Activated CD8-positive, alpha-beta T cell treated with anti-CD3 and anti-CD28 coated beads, Interleukin-2, amount 10 ng/mL, durations not matched to agents 7 days and 5 days (primary cell): ENCODE measurements at regions of chr14 and their contacts with region 1.

Region 1: DNA sequence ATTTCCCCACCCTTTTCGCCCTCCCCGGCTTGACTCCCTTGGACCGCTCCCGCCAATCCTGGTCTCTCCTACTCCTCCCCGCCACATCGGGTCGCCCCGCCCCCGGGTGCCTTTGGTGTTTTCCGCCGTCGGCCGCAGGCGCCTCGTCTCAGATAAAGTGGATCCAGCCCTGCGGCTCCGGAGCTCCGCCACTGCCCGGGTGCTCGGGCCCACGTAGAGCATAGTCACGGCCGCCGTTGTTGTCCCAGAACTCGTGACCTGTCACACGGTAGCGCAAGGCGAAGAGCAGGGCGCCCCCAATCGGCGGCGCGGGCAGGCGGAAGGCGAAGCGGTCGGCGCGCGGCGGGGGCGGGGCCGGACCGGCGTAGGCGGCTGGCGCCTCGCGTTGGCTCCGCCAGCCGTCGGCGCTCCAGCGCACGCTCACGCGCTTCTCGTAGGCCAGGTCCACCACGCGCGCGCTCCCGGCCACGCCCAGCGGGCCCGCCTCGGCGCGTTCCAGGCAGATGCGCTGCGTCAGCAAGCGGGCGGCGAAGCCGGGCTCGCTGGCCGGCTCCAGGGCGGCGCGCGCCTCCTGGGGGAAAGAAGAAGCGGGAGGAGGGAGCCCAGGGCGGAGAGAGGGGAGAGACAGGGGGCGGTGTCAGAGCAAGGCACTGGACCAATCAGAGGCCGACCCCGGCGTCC is 1.2 kb downstream of the PPP1R3E start:
- DNase-seq: peak; percentile 97
- ATAC-seq: peak; percentile 86
- H3K4me3 Mint-ChIP-seq: peak overlapping the region; percentile 91
- H3K27ac Mint-ChIP-seq: peak overlapping the region; percentile 99
- H3K4me1 Mint-ChIP-seq: peaks cover 31% of the 10 kb centered on the region
- H3K27me3 Mint-ChIP-seq: peaks cover 11% of the 10 kb centered on the region

Region 2: DNA sequence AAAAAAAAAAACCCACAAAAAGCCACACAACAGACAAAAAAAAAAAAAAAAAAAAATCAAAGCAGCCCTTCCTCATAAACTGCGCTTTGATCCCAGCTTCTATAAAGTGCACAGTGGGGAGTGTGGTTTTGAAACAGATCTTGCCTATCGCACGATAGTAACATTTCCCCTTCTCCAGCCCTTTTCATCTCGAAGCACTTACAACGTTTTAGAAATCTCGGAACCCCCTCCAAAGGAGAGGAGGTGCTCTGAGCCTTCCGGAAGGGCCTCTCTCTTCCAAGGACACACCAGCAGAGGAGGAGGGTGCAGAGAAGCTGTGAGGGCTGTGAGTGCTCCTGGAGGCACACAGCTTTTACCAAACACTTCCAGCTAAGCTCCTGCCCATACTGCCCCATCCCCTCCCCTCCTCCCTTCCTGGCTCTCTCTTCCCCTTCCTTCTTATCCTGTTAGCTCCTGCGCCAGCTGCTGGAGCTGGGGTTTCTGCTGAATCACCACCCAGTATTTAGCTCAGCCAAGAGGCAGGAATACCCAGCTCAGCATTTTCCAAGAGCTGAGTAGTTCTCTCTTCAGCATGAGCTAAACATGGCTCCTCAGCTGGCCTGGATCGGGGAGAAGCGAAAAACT is 146.4 kb before region 1 on chr14:
- CTCF ChIA-PET with region 1: no interaction called
- POLR2A ChIA-PET with region 1: no interaction called
- DNase-seq: no peak
- ATAC-seq: no peak
- H3K4me3 Mint-ChIP-seq: no peak overlapping the region
- H3K27ac Mint-ChIP-seq: no peak overlapping the region
- H3K4me1 Mint-ChIP-seq: peaks cover 7% of the 10 kb centered on the region
- H3K27me3 Mint-ChIP-seq: peaks cover 3% of the 10 kb centered on the region

Region 3: DNA sequence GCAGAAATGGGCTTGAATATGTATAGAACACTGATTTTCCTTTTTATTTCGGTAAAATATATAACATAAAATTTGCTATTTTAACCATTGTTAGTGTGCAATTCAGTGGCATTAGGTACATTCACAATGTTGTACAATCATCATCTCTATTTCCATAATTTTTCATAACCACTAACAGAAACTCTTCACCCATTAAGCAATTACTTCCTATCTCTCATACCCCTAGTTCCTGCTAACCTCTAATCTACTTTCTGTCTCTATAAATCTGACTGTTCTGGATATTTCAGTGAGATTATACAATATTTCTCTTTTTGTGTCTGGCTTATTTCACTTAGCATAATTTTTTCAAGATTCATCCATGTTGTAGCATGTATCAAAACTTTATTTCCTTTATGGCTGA is 72.6 kb before region 1 on chr14:
- CTCF ChIA-PET with region 1: no interaction called
- POLR2A ChIA-PET with region 1: no interaction called
- DNase-seq: no peak
- ATAC-seq: no peak
- H3K4me3 Mint-ChIP-seq: no peak overlapping the region
- H3K27ac Mint-ChIP-seq: no peak overlapping the region
- H3K4me1 Mint-ChIP-seq: no peaks in the 10 kb centered on the region
- H3K27me3 Mint-ChIP-seq: peaks cover 19% of the 10 kb centered on the region

Region 4: GRCh38 chr14:23286020-23286905 is 15.2 kb before region 1 on chr14 and contains the start of gene HOMEZ:
- CTCF ChIA-PET with region 1: interaction called, 24 read pairs
- POLR2A ChIA-PET with region 1: interaction called, 9 read pairs
- DNase-seq: peak; percentile 99
- ATAC-seq: peak; percentile 100
- H3K4me3 Mint-ChIP-seq: peak within 1 kb of the TSS; percentile 96
- H3K27ac Mint-ChIP-seq: peak within 1 kb of the TSS; percentile 91
- H3K4me1 Mint-ChIP-seq: peaks cover 18% of the 10 kb centered on the region
- H3K27me3 Mint-ChIP-seq: no peaks in the 10 kb centered on the region
- total RNA-seq, gene HOMEZ: 7.8 to 9.2 TPM

Region 5: GRCh38 chr14:23335623-23336022 is 34.2 kb after region 1 on chr14:
- CTCF ChIA-PET with region 1: no interaction called
- POLR2A ChIA-PET with region 1: no interaction called
- DNase-seq: no peak
- ATAC-seq: no peak
- H3K4me3 Mint-ChIP-seq: no peak overlapping the region
- H3K27ac Mint-ChIP-seq: no peak overlapping the region
- H3K4me1 Mint-ChIP-seq: no peaks in the 10 kb centered on the region
- H3K27me3 Mint-ChIP-seq: peaks cover 27% of the 10 kb centered on the region

Region 6: GRCh38 chr14:23387916-23388882 is 86.8 kb after region 1 on chr14:
- CTCF ChIA-PET with region 1: no interaction called
- POLR2A ChIA-PET with region 1: no interaction called
- DNase-seq: no peak
- ATAC-seq: no peak
- H3K4me3 Mint-ChIP-seq: no peak overlapping the region
- H3K27ac Mint-ChIP-seq: no peak overlapping the region
- H3K4me1 Mint-ChIP-seq: no peaks in the 10 kb centered on the region
- H3K27me3 Mint-ChIP-seq: no peaks in the 10 kb centered on the region